Left cardiac atrium (tissue), 4 donors: ENCODE measurements at regions of chr1 and their contacts with region 1.

Region 1: DNA sequence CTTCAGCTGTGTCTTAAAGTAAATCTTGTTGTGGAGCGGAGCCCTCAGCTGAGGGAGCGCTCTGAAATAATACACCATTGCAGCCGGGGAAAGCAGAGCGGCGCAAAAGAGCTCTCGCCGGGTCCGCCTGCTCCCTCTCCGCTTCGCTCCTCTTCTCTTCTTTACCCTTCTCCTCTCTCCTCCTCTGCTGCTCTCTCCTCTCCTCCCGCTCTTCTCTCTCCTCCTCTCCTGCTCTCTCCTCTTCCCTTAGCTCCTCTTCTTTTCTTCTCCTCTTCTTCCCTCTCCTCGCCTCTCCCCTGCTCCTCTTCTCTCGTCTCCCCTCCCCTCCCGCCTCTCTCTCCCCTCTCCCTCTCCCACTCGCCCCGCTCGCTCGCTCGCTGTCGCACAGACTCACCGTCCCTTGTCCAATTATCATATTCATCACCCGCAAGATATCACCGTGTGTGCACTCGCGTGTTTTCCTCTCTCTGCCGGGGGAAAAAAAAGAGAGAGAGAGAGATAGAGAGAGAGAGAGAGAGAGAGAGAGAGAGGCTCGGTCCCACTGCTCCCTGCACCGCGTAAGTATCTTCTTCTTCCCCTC is at the start of gene PROX1:
- DNase-seq: no peak
- ATAC-seq: peak; percentile 52 to 74
- total RNA-seq, gene PROX1: 59.5 to 77.9 TPM

Region 2: DNA sequence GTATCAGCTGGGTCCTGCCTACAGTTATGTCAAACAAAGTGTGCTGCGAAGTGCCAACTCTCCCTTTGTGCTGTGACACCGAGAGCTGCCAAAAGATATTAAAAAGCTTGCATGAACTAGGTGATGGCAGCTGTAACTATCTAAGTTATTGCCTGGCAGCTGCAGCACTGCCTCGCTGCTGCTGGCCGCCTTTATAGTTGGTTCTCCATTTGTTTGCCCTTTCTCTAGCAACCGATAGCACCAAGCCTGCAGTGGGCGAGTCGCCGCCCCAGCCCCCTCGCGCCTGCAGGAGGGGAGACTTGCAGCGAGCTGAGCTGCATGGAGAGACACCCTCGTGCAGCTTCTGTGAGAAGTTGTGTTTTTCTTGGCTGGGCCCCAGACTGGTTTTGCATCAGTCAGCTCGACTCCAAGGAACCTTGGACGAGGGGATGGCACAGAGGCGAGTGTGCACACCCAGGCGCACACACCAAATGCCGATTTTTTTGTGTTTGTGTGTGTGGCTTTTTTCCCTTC is 606.4 kb before region 1 on chr1:
- intact Hi-C with region 1: loop called in 1 of 2 experiments (anchors 10 kb)
- DNase-seq: peak; percentile 22
- ATAC-seq: peak; percentile 81 to 86

Region 3: DNA sequence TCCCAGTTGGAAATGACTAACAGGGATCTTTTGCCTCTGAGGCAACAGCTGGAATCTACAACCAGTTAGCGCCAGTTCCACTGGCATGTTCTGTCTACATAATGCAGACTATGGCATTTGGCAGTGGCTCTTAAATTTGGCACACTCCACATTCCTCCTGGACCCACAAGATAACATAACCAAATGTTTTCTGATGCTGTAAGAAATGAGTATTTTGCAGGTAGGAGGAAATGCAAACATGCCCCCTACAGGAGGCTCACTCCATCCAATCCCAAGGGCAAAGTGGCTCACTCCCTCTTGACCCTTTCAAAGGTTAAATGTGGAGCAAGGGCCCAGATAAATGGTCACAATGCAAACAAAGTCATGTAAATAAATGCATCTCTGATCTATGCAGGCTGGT is 129.4 kb before region 1 on chr1:
- intact Hi-C with region 1: no loop called
- DNase-seq: no peak
- ATAC-seq: no peak

Region 4: DNA sequence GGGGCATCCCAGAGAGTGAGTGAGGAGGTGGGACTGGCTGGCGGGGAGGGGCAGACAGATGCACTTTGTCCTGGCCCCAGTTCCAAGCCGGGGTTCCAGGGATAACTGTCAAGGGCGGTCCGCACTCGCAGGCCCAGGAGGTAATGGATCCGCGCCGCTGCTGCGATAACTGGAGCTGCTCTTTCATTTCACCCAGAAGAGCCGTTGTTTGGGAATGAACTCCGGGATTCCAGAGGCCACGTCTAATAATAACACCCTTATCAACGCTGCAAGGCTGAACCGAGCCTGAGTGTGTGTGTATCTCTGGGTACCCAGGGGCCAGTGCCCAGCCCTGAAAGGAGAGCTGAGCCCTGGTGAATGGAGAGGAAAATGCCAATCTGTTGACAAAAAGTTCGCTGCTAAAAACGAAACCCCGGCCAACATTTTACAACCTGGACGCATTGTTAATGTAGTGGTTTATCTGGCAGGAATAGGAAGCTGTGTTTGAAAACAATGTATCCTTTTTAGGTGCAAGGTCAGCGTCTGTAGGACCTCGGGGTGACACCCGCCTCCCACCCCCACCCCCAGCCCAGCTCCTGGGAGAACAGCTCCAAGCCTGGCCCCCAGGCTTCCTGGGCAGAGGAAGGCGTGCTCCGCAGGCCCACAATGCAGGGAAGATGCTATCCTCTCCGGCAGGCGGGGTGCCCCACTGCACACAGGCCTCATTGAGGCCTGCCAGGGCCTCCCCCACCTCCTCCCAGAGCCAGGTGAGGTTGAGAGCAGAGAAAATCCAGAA is 119.5 kb after region 1 on chr1:
- intact Hi-C with region 1: loop called in 1 of 2 experiments (anchors 5 kb)
- DNase-seq: peak; percentile 48
- ATAC-seq: peak; percentile 93